Aorta (tissue), 5 donors: ENCODE measurements at regions of chr14 and their contacts with region 1.

Region 1: DNA sequence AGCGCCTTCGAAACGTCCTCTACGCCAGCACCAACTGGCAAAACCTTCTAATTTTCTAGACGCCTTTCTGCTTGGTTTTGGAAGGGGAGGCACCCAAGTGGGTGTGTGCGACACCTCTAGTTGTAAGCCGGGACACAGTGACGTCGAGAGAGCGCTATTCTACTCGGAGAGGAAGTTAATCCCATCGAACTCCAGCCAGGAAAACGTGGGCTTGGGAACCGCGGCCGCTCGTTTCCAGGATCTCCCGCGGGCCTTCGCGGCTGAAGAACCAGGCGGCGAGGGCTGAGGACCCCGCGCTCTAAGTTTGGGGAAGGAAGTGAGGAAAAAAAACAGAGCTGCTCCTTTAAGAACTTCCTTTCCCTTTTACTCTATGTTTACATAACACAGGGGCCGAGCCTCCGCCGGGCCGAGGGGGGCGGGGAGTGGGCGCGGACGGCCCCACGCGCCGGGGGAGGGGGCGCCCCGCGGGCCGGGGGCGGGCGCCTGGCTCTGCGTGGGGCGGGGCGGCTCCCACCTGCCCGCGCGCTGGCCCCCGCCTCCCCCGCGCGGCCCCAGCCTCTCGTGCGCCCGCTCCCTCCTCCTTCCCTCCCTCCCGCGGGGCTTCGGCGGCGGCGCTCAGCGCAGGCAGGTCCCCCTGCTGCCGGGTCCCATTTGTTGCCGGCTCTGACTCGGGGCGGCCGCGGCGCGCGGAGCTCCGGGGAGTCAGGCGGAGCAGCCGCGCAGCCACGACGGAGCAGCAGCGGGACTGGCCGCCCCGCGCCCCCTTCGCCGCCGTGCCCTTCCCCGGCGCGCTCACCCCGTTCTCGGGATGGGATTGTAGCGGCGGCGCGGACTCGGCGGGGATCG is at the start of gene PELI2:
- DNase-seq: peak; percentile 87 to 93
- ATAC-seq: peak; percentile 91
- H3K4me3 ChIP-seq: peak within 1 kb of the TSS; percentile 79 to 96
- H3K27ac ChIP-seq: peak within 1 kb of the TSS; percentile 70 to 73
- H3K4me1 ChIP-seq: peaks cover 4 to 8% of the 10 kb centered on the region in 2 donors
- H3K27me3 ChIP-seq: no peaks in the 10 kb centered on the region
- total RNA-seq, gene PELI2: 19.7 to 22.8 TPM

Region 2: GRCh38 chr14:55707365-55707804 is 410.6 kb before region 1 on chr14:
- intact Hi-C with region 1: loop called in 1 of 2 experiments (anchors 10 kb)
- DNase-seq: no peak
- ATAC-seq: peak; percentile 61
- H3K4me3 ChIP-seq: no peak overlapping the region
- H3K27ac ChIP-seq: no peak overlapping the region
- H3K4me1 ChIP-seq: peaks cover 0 to 3% of the 10 kb centered on the region in 2 donors
- H3K27me3 ChIP-seq: no peaks in the 10 kb centered on the region

Region 3: GRCh38 chr14:56100556-56100955 is 17.4 kb before region 1 on chr14:
- intact Hi-C with region 1: loop called in 1 of 2 experiments (anchors 2 kb)
- DNase-seq: no peak
- ATAC-seq: no peak
- H3K4me3 ChIP-seq: no peak overlapping the region
- H3K27ac ChIP-seq: no peak overlapping the region
- H3K4me1 ChIP-seq: peaks cover 0 to 6% of the 10 kb centered on the region in 2 donors
- H3K27me3 ChIP-seq: no peaks in the 10 kb centered on the region

Region 4: GRCh38 chr14:56422703-56423213 is 304.8 kb after region 1 on chr14:
- intact Hi-C with region 1: loop called in 1 of 2 experiments (anchors 5 kb)
- DNase-seq: peak in 1 of 2 donors; percentile 62
- ATAC-seq: peak; percentile 86
- H3K4me3 ChIP-seq: no peak overlapping the region
- H3K27ac ChIP-seq: no peak overlapping the region
- H3K4me1 ChIP-seq: no peaks in the 10 kb centered on the region
- H3K27me3 ChIP-seq: no peaks in the 10 kb centered on the region